ENCODE measurements at regions of chr4 and their contacts with region 1.

Region 1: DNA sequence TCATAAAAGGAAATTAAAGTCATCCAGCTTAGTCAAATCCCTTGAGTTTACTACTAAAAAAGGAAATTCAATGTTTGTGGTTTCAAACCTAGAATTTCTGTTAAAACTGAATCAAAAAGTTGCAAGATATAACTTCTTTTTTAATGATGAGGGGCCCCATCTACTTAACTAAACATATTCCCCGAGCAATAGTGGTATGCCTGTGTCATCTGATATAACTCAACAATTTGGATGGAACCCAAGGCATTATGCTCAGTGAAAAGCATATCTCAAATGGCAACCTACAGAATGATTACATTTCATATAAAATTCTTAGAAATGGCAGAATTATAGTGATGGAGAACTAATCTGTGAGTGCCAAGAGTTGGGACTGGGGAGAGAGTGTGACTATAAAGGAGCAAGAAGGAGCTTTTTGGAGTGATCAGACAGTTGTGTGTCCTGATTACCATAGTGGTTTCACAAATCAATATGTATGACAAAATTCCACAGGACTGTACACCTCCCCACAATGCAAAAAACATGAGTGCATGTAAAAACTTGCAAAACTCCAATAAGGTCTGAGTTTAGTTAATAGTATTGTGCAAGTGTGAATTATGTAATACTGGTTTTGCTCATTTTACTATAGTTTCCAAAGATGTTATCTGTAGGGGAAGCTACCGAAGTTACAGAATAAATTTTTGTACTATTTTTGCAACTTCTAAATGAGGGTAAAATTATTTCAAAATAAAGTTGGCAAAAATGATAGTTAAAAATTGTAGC is 323.2 kb downstream of the ARHGAP24 start:
- DNase-seq: no peak
- ATAC-seq: no peak
- H3K4me3 Mint-ChIP-seq: no peak overlapping the region
- H3K27ac Mint-ChIP-seq: no peak overlapping the region
- H3K4me1 Mint-ChIP-seq: peaks cover 3% of the 10 kb centered on the region; the same call in 1 of the 2 replicates
- H3K27me3 Mint-ChIP-seq: no peaks in the 10 kb centered on the region
- CTCF ChIP-seq: no peak

Region 2: GRCh38 chr4:85642356-85643100 is 155.7 kb before region 1 on chr4:
- CTCF ChIA-PET with region 1: no interaction called
- POLR2A ChIA-PET with region 1: no interaction called
- DNase-seq: no peak
- ATAC-seq: no peak
- H3K4me3 Mint-ChIP-seq: no peak overlapping the region
- H3K27ac Mint-ChIP-seq: no peak overlapping the region
- H3K4me1 Mint-ChIP-seq: no peaks in the 10 kb centered on the region
- H3K27me3 Mint-ChIP-seq: no peaks in the 10 kb centered on the region
- CTCF ChIP-seq: no peak

Region 3: DNA sequence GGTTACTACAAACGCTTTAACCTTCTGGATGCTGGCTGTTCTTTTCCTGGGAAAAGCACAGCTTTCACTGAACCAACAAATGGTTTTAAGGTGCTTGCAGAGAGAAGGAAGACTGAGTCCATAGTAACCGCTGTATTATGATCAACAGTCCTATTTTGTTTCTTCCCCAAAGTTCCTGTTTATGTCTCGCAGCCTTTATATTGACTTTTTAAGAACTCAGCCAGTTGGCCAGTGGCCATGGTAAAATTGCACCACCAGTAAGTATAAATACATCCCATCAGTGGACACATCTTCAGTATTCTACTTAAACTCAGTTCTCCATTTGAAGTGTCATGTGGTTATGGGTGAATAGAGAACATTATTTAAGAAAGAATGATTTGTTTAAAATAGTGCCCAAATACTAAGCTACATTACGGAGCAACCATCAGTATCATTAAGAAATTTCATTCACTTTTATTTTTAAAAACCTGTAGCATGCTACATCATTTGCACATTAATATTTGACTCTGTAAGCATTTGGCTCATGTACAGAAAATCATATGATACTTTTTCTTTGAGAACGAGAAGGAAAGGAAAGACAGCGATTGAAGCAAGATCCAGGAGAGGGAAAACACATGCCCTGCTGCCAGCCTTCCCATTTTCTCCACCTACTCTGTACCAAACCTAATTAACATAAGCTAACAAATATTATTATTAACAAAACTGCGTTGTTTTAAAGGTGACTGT is 36.2 kb before region 1 on chr4:
- CTCF ChIA-PET with region 1: interaction called, 11 read pairs
- POLR2A ChIA-PET with region 1: no interaction called
- DNase-seq: no peak
- ATAC-seq: no peak
- H3K4me3 Mint-ChIP-seq: no peak overlapping the region
- H3K27ac Mint-ChIP-seq: no peak overlapping the region
- H3K4me1 Mint-ChIP-seq: peaks cover 51% of the 10 kb centered on the region
- H3K27me3 Mint-ChIP-seq: no peaks in the 10 kb centered on the region
- CTCF ChIP-seq: no peak

Region 4: DNA sequence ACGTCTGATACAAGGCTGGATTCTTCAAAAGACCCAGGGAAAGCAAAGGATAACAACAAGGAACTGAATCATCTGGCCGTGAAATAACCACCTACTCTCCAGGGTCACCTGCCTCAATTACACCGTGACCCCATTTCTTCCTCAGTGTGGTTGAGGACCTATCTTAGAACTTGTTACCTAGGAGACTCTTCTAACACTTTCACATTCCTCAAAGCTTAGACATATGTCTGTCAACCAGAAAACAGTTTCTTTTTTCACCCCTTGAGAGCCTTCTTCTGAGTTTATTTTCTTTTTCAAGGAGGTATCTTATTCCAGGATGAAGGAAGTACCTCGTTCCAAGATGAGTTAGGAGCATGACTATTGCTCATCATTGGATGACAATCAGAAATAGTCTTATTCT is 14.6 kb after region 1 on chr4:
- CTCF ChIA-PET with region 1: interaction called, 13 read pairs
- POLR2A ChIA-PET with region 1: no interaction called
- DNase-seq: no peak
- ATAC-seq: no peak
- H3K4me3 Mint-ChIP-seq: no peak overlapping the region
- H3K27ac Mint-ChIP-seq: no peak overlapping the region; the same call in 1 of the 2 replicates
- H3K4me1 Mint-ChIP-seq: peaks cover 17% of the 10 kb centered on the region
- H3K27me3 Mint-ChIP-seq: no peaks in the 10 kb centered on the region
- CTCF ChIP-seq: no peak

Region 5: GRCh38 chr4:85870298-85871083 is 72.3 kb after region 1 on chr4:
- CTCF ChIA-PET with region 1: interaction called, 14 read pairs
- POLR2A ChIA-PET with region 1: no interaction called
- DNase-seq: no peak
- ATAC-seq: no peak
- H3K4me3 Mint-ChIP-seq: no peak overlapping the region
- H3K27ac Mint-ChIP-seq: no peak overlapping the region
- H3K4me1 Mint-ChIP-seq: peaks cover 22% of the 10 kb centered on the region
- H3K27me3 Mint-ChIP-seq: no peaks in the 10 kb centered on the region
- CTCF ChIP-seq: no peak

Region 6: GRCh38 chr4:85928775-85929591 is 130.8 kb after region 1 on chr4:
- CTCF ChIA-PET with region 1: interaction called, 11 read pairs
- POLR2A ChIA-PET with region 1: no interaction called
- DNase-seq: no peak
- ATAC-seq: no peak
- H3K4me3 Mint-ChIP-seq: peak overlapping the region; percentile 8
- H3K27ac Mint-ChIP-seq: peak overlapping the region; percentile 46
- H3K4me1 Mint-ChIP-seq: peaks cover 54% of the 10 kb centered on the region
- H3K27me3 Mint-ChIP-seq: no peaks in the 10 kb centered on the region
- CTCF ChIP-seq: no peak

Region 7: DNA sequence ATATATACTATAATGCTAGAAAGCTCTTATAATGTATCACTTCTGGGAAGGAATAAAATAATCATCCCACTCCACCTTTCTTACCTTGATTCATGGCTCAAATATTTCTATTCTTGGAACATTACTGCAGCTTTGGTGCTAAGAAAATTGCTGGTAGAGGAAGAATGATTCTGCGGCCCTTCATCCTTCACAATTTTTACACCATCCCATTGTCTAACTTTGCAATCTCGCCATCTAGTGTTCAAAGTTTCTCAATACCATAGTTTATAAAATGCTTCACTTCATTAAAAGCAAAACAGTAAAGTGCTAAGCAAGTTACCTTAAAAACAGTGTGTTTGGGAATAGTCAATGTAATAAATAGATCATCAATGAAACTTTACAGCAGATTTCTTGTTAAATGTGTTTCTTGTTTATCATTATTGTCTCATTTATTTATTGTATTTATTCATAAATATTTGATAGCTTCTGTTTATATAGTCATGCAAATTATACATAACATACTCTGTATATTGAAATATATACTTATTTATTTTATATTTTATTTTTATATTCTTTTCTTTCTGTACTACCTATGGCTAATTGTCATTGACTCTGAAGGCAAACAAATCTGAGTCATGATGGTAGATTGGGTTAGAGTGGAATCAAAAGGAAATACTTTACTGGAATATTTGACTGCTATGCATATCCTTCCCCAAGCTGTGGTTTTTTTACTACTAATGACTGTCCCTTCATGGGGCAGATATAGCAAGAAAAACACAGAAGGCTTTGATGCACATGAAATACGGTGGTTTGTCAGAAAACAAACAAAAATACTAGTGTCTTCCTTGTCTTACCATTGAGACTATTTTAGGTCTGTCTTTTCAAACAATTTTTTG is 171.0 kb after region 1 on chr4:
- CTCF ChIA-PET with region 1: interaction called, 85 read pairs
- POLR2A ChIA-PET with region 1: no interaction called
- DNase-seq: no peak
- ATAC-seq: peak; percentile 34; the same call in 1 of the 2 replicates
- H3K4me3 Mint-ChIP-seq: no peak overlapping the region
- H3K27ac Mint-ChIP-seq: no peak overlapping the region
- H3K4me1 Mint-ChIP-seq: peaks cover 7% of the 10 kb centered on the region
- H3K27me3 Mint-ChIP-seq: no peaks in the 10 kb centered on the region; the same call in 1 of the 2 replicates
- CTCF ChIP-seq: no peak

Region 8: GRCh38 chr4:86043755-86044592 is 245.8 kb after region 1 on chr4:
- CTCF ChIA-PET with region 1: interaction called, 16 read pairs
- POLR2A ChIA-PET with region 1: no interaction called
- DNase-seq: no peak
- ATAC-seq: peak; percentile 50
- H3K4me3 Mint-ChIP-seq: no peak overlapping the region
- H3K27ac Mint-ChIP-seq: no peak overlapping the region
- H3K4me1 Mint-ChIP-seq: peaks cover 15% of the 10 kb centered on the region
- H3K27me3 Mint-ChIP-seq: no peaks in the 10 kb centered on the region
- CTCF ChIP-seq: peak; percentile 47; the same call in 1 of the 2 replicates

Region 9: GRCh38 chr4:86092684-86093083 is 294.5 kb after region 1 on chr4:
- CTCF ChIA-PET with region 1: no interaction called
- POLR2A ChIA-PET with region 1: no interaction called
- DNase-seq: no peak
- ATAC-seq: no peak
- H3K4me3 Mint-ChIP-seq: no peak overlapping the region
- H3K27ac Mint-ChIP-seq: no peak overlapping the region
- H3K4me1 Mint-ChIP-seq: peaks cover 16% of the 10 kb centered on the region
- H3K27me3 Mint-ChIP-seq: no peaks in the 10 kb centered on the region
- CTCF ChIP-seq: no peak